Naive thymus-derived CD4-positive, alpha-beta T cell (primary cell): ENCODE measurements at regions of chr19 and their contacts with region 1.

Region 1: GRCh38 chr19:680287-681028 is 4.3 kb downstream of the FSTL3 start:
- DNase-seq: peak; percentile 94 to 100 (median 97)
- ATAC-seq: peak; percentile 91
- H3K4me3 ChIP-seq: peak overlapping the region; percentile 78
- H3K4me3 Mint-ChIP-seq: peak overlapping the region; percentile 77 to 95 (median 92)
- H3K27ac ChIP-seq: peak overlapping the region; percentile 82
- H3K27ac Mint-ChIP-seq: peak overlapping the region; percentile 89 to 100 (median 98)
- H3K4me1 ChIP-seq: peaks cover 5 to 12% of the 10 kb centered on the region in 2 donors
- H3K4me1 Mint-ChIP-seq: peaks cover 0 to 8% (median 2%) of the 10 kb centered on the region in 7 donors
- H3K27me3 ChIP-seq: peaks cover 0 to 2% of the 10 kb centered on the region in 2 donors
- H3K27me3 Mint-ChIP-seq: peaks cover under 1 to 10% (median under 1%) of the 10 kb centered on the region in 5 donors

Region 2: GRCh38 chr19:531009-531752 is 149.3 kb before region 1 on chr19:
- CTCF ChIA-PET with region 1: no interaction called
- POLR2A ChIA-PET with region 1: no interaction called
- intact Hi-C with region 1: loop called in 1 of 2 experiments (anchors 1 kb)
- DNase-seq: peak; percentile 79 to 100 (median 94)
- ATAC-seq: peak; percentile 87
- H3K4me3 ChIP-seq: peak overlapping the region; percentile 72
- H3K4me3 Mint-ChIP-seq: peak overlapping the region; percentile 64 to 93 (median 82)
- H3K27ac ChIP-seq: peak overlapping the region; percentile 90
- H3K27ac Mint-ChIP-seq: peak overlapping the region in 8 of 9 donors; percentile 19 to 87 (median 80)
- H3K4me1 ChIP-seq: peaks cover 8 to 9% of the 10 kb centered on the region in 2 donors
- H3K4me1 Mint-ChIP-seq: peaks cover 8 to 32% (median 16%) of the 10 kb centered on the region in 7 donors
- H3K27me3 ChIP-seq: no peaks in the 10 kb centered on the region
- H3K27me3 Mint-ChIP-seq: peaks cover 0 to 4% (median 0%) of the 10 kb centered on the region in 5 donors

Region 3: DNA sequence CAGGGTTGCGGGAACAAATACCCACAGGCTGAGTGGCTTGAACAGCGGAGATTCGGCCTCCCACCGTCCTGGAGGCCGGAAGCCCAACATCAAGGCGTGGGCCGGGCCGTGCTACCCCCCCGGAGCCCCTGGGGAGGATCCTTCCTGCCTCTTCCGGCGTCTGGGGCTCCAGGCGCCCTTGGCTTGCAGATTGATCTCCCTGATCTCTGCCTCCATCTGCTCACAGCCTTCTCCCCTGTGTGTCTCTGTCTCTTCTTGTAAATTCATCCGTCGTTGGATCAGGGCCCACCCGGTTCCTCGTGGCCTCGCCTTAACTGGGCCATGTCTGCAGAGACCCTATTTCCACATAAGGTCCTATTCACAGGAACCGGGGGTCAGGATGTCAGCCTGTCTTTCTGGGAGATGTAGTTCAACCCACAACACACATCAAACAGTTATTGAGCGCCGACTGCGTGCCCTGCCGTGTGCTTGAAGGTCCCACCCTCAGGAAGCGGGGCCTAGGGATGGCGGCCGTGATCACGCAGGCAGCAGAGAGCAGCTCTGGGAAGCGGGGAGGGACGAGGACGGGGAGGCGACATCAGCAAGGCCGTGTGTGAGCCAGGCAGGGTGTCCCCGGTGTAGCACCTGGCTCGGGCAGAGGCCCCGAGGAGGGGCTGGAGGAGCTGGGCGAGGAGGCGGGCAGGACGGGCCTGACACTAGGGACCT is 69.5 kb before region 1 on chr19:
- CTCF ChIA-PET with region 1: no interaction called
- POLR2A ChIA-PET with region 1: no interaction called
- intact Hi-C with region 1: loop called (anchors 1 to 2 kb)
- DNase-seq: peak in 8 of 9 donors; percentile 55 to 75 (median 62)
- ATAC-seq: peak; percentile 72
- H3K4me3 ChIP-seq: peak overlapping the region; percentile 49
- H3K4me3 Mint-ChIP-seq: peak overlapping the region; percentile 83 to 97 (median 94)
- H3K27ac ChIP-seq: peak overlapping the region; percentile 75
- H3K27ac Mint-ChIP-seq: peak overlapping the region; percentile 81 to 98 (median 90)
- H3K4me1 ChIP-seq: peaks cover 12% of the 10 kb centered on the region in 2 donors
- H3K4me1 Mint-ChIP-seq: peaks cover 0 to 23% (median 17%) of the 10 kb centered on the region in 7 donors
- H3K27me3 ChIP-seq: no peaks in the 10 kb centered on the region
- H3K27me3 Mint-ChIP-seq: no peaks in the 10 kb centered on the region

Region 4: GRCh38 chr19:662962-663681 is 17.3 kb before region 1 on chr19 and contains the start of gene RNF126:
- CTCF ChIA-PET with region 1: interaction called, 7 read pairs
- POLR2A ChIA-PET with region 1: interaction called, 11 read pairs
- intact Hi-C with region 1: loop called (anchors 1 kb)
- DNase-seq: peak; percentile 83 to 92 (median 88)
- ATAC-seq: peak; percentile 78
- H3K4me3 ChIP-seq: peak within 1 kb of the TSS; percentile 92
- H3K4me3 Mint-ChIP-seq: peak within 1 kb of the TSS; percentile 95 to 99 (median 98)
- H3K27ac ChIP-seq: peak within 1 kb of the TSS; percentile 96
- H3K27ac Mint-ChIP-seq: peak within 1 kb of the TSS; percentile 93 to 98 (median 97)
- H3K4me1 ChIP-seq: peaks cover 27 to 30% of the 10 kb centered on the region in 2 donors
- H3K4me1 Mint-ChIP-seq: peaks cover 20 to 40% (median 32%) of the 10 kb centered on the region in 7 donors
- H3K27me3 ChIP-seq: no peaks in the 10 kb centered on the region
- H3K27me3 Mint-ChIP-seq: peaks cover 0 to 2% (median 0%) of the 10 kb centered on the region in 5 donors
- total RNA-seq, gene RNF126: 75.1 to 110 (median 101) TPM

Region 5: DNA sequence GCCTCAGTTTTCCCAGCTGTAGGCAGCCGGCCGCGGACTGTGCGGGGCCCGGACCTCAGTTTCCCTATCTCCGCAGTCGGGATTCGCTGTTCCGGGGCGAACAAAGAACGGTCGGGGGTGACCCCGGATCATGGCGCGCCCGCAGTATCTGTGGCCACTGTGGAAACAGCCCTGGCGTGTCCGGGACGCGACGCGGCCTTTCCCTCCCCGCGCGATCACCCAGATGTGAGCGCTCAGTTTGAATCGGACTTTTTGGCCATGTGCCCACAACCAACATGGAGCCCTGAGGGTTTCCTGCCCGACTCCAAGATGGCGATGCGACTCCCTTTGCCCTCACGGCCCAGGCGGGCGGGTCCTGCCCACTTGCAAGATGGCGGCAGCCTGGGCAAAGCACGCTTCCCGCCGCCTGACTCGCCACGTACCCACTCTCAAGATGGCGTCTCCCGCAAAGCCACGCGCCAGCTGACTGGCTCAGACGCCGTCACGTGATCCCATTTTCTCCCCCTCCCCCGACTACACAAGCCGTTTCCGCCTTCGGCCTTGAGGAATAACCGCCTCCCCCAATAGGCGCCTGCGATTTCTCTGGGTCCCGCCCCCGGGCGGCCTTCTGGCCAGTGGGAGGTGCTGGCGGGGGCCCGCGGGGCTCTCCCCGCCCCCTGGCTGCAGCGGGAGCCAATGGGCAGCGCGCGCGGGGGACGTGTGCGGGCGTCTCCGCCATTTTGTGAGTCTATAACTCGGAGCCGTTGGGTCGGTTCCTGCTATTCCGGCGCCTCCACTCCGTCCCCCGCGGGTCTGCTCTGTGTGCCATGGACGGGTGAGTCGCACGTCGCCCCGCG is 116.5 kb after region 1 on chr19 and contains the start of gene PTBP1:
- CTCF ChIA-PET with region 1: no interaction called
- POLR2A ChIA-PET with region 1: no interaction called
- intact Hi-C with region 1: loop called (anchors 1 kb)
- DNase-seq: peak; percentile 94 to 100 (median 100)
- ATAC-seq: peak; percentile 91
- H3K4me3 ChIP-seq: peak within 1 kb of the TSS; percentile 78
- H3K4me3 Mint-ChIP-seq: peak within 1 kb of the TSS; percentile 86 to 97 (median 94)
- H3K27ac ChIP-seq: peak within 1 kb of the TSS; percentile 78
- H3K27ac Mint-ChIP-seq: peak within 1 kb of the TSS; percentile 85 to 97 (median 92)
- H3K4me1 ChIP-seq: peaks cover 29 to 31% of the 10 kb centered on the region in 2 donors
- H3K4me1 Mint-ChIP-seq: peaks cover 26 to 36% (median 32%) of the 10 kb centered on the region in 7 donors
- H3K27me3 ChIP-seq: no peaks in the 10 kb centered on the region
- H3K27me3 Mint-ChIP-seq: peaks cover 0 to 2% (median 0%) of the 10 kb centered on the region in 5 donors
- total RNA-seq, gene PTBP1: 313 to 524 (median 326) TPM

Region 6: GRCh38 chr19:984165-984967 is 303.9 kb after region 1 on chr19 and contains the start of gene WDR18:
- CTCF ChIA-PET with region 1: no interaction called
- POLR2A ChIA-PET with region 1: no interaction called
- intact Hi-C with region 1: loop called in 1 of 2 experiments (anchors 5 kb)
- DNase-seq: peak; percentile 62 to 93 (median 76)
- ATAC-seq: peak; percentile 93
- H3K4me3 ChIP-seq: peak within 1 kb of the TSS; percentile 56
- H3K4me3 Mint-ChIP-seq: peak within 1 kb of the TSS; percentile 78 to 98 (median 92)
- H3K27ac ChIP-seq: peak within 1 kb of the TSS; percentile 99
- H3K27ac Mint-ChIP-seq: peak within 1 kb of the TSS; percentile 80 to 94 (median 90)
- H3K4me1 ChIP-seq: peaks cover 4 to 17% of the 10 kb centered on the region in 2 donors
- H3K4me1 Mint-ChIP-seq: peaks cover 6 to 21% (median 17%) of the 10 kb centered on the region in 7 donors
- H3K27me3 ChIP-seq: no peaks in the 10 kb centered on the region
- H3K27me3 Mint-ChIP-seq: no peaks in the 10 kb centered on the region
- total RNA-seq, gene WDR18: 20.7 to 63.8 (median 48.5) TPM